ENCODE measurements at regions of chr4 and their contacts with region 1.

Region 1: GRCh38 chr4:143400082-143400481 is 63.4 kb downstream of the GAB1 start:
- DNase-seq: no peak
- H3K4me3 ChIP-seq: no peak overlapping the region
- CTCF ChIP-seq: no peak

Region 2: DNA sequence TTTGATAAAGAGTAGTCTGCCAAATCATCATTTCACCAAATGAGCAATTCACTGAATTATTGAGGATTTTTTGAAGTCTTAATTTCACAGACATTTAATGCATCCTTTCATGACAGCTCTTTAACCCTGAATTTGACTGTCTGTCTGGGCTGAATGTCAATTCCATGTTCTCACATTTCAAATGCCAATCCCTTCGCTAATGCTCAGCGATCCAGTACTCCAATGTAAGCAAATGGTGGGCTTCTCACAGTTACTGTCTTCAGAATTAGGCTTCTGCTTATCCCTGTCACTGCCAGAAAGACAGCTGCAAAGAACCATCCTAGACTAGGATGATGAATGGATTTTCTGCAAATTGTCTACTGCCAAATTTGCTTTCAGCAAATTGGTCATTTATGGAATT is 251.6 kb before region 1 on chr4:
- CTCF ChIA-PET with region 1: no interaction called
- POLR2A ChIA-PET with region 1: no interaction called
- DNase-seq: no peak
- H3K4me3 ChIP-seq: no peak overlapping the region
- CTCF ChIP-seq: no peak

Region 3: DNA sequence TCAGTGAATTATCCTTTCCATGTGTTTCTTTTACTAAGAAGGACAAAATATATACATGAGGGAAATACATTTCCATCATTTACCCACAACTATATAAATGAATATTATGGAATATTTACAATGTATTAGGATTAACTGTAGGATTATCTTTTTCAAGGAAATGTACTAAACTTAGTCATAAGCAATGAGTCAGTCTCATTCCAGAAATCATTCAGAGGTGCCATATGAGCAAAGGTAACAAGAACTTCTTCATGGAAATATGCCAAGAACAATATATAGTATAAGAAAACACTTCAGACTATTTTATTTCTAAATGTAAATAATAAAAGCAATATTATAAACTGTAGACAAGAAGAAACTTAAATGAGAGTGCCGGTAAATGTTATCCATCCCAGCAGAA is 148.3 kb before region 1 on chr4:
- CTCF ChIA-PET with region 1: no interaction called
- POLR2A ChIA-PET with region 1: no interaction called
- DNase-seq: no peak
- H3K4me3 ChIP-seq: no peak overlapping the region
- CTCF ChIP-seq: no peak

Region 4: GRCh38 chr4:143389579-143390195 is 10.4 kb before region 1 on chr4:
- CTCF ChIA-PET with region 1: interaction called, 14 read pairs
- POLR2A ChIA-PET with region 1: no interaction called
- DNase-seq: no peak
- H3K4me3 ChIP-seq: no peak overlapping the region
- CTCF ChIP-seq: no peak